Right ventricle myocardium inferior (tissue), 1 donor: ENCODE measurements at regions of chr1 and their contacts with region 1.

Region 1: DNA sequence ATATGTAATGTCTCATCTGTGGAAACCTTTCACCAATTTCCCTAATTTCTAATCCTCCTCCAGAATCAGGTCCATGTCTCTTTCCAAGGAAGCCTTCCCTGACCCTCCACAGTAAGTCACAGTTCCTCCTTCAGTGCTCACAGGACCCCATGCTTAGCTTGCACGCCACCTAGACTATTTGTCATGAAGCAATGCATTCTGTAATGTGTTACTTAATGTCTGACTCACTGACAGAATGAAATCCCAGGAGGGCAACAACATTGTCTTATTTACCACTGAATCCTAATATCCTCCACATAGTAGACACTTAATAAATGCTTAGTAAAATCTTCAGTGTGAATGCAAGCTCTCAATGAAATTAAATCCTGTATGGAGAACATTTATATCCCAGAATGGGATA is 245.9 kb upstream of the PLD5 start:
- DNase-seq: no peak
- ATAC-seq: no peak

Region 2: DNA sequence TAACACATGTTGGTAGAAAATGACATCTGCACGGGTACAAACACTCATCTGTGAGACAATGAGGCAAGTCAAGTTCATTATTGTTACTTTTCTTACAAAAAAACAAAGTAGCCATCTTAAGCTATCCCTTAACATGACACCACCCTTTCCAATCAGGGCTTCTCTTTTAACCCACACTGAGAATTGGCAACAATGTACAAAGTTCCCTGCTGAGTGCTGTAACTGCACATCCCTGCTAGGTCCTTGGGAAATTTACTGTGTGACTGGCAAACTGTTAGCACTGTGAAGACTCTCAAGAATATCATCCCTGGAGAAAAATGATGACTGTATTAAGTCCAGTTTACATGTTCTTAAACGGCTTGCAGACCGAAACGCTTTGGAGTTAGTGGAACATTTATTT is 60.1 kb before region 1 on chr1:
- intact Hi-C with region 1: no loop called
- DNase-seq: no peak
- ATAC-seq: no peak

Region 3: DNA sequence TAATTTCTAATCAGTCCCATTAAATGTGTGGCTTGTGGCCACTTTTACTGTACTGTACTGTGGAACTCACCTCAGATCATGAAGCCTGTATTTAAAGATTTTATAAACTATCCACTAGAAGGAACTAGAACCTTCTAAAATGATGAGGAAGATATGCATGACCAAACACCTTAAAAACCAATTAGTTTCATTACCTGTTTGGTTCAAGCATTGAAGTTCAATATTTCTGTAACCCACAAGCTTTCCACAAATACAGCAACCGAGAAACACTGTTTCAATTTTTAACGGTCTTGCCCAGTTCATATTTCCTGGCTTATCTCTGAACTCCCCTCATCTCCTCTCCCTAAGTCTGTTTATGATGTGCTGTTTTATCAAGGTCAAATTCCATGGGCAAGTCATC is 18.4 kb after region 1 on chr1:
- intact Hi-C with region 1: loop called (anchors 1 kb)
- DNase-seq: no peak
- ATAC-seq: no peak